ENCODE measurements at regions of chrX and their contacts with region 1.

Region 1: GRCh38 chrX:15033917-15034316 is 160.7 kb downstream of the MOSPD2 start:
- DNase-seq: no peak
- H3K4me3 Mint-ChIP-seq: no peak overlapping the region
- H3K27ac Mint-ChIP-seq: no peak overlapping the region
- H3K4me1 Mint-ChIP-seq: peaks cover 16% of the 10 kb centered on the region
- H3K27me3 Mint-ChIP-seq: no peaks in the 10 kb centered on the region

Region 2: DNA sequence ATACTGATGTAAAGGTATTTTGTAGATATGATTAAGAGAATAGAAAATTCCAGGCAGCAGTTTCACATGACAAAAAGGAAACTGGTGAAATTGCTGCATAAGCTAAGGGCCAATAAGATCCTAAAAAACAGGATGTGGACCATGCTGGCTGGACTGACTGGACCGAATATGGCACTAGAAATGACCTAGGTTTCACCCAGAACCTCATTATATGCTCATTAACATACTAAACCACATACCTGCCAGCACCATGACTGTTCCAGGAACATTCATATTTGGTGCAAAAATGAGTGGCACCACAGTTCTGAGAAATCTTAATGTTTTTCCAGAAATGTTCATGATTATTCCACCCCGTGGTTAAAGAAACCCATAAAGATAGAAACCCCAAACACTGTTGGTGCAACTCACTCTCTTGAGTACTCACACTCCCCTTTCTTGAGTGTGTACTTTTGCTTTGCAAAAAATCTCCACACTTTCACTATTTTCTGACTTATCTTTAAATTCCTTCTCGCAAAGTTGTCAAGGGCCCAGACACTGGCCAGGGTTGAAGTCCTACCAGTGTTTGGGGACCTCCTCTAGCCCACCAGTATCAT is 235.0 kb before region 1 on chrX:
- CTCF ChIA-PET with region 1: no interaction called
- POLR2A ChIA-PET with region 1: no interaction called
- intact Hi-C with region 1: loop called (anchors 5 kb)
- DNase-seq: peak; percentile 12
- H3K4me3 Mint-ChIP-seq: no peak overlapping the region
- H3K27ac Mint-ChIP-seq: no peak overlapping the region
- H3K4me1 Mint-ChIP-seq: peaks cover 18% of the 10 kb centered on the region
- H3K27me3 Mint-ChIP-seq: peaks cover 2% of the 10 kb centered on the region

Region 3: GRCh38 chrX:14886252-14886651 is 147.7 kb before region 1 on chrX:
- CTCF ChIA-PET with region 1: no interaction called
- POLR2A ChIA-PET with region 1: no interaction called
- intact Hi-C with region 1: loop called (anchors 10 kb)
- DNase-seq: no peak
- H3K4me3 Mint-ChIP-seq: no peak overlapping the region
- H3K27ac Mint-ChIP-seq: no peak overlapping the region
- H3K4me1 Mint-ChIP-seq: peaks cover 35% of the 10 kb centered on the region
- H3K27me3 Mint-ChIP-seq: no peaks in the 10 kb centered on the region

Region 4: GRCh38 chrX:15158736-15159406 is 125.0 kb after region 1 on chrX:
- CTCF ChIA-PET with region 1: no interaction called
- POLR2A ChIA-PET with region 1: no interaction called
- intact Hi-C with region 1: loop called (anchors 5 kb)
- DNase-seq: peak; percentile 51
- H3K4me3 Mint-ChIP-seq: peak overlapping the region; percentile 57
- H3K27ac Mint-ChIP-seq: peak overlapping the region; percentile 70
- H3K4me1 Mint-ChIP-seq: peaks cover 34% of the 10 kb centered on the region
- H3K27me3 Mint-ChIP-seq: peaks cover 2% of the 10 kb centered on the region